GM12878 (cell line): ENCODE measurements at regions of chr7 and their contacts with region 1.

Region 1: DNA sequence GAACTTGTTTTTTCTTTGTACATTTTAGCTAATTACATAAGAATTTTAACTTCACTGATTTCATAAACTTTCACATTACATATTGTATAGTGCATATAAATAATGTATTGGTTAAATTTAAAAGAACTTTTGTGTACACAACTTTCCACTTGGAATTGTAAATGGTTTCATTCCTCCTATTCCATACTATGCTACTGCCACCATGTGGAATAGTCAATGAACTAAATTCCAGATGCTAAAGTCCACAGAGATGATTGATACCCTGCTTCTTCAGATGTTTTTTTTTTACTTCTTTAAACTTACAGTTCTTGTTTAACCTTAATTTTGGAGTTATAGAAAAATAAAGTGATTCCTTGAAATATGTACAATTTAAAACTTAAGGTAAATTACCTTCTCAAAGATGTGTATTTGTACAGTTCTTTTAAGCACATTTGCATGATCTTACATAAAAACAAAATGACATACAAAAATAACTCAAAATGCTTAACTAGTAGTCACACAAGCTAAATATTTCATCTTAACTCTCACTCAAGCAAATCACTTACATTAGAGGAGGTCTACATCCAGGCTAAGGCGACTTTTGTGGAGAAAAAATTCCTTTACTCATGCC is 247.6 kb upstream of the HGF start:
- DNase-seq: no peak
- ATAC-seq: 0 out of 3 replicates have a peak, but pooled peaks have one; percentile 28
- H3K4me3 ChIP-seq: no peak overlapping the region
- H3K27ac ChIP-seq: no peak overlapping the region
- H3K4me1 ChIP-seq: no peaks in the 10 kb centered on the region
- H3K27me3 ChIP-seq: no peaks in the 10 kb centered on the region; a peak in 1 of 4 replicates
- CTCF ChIP-seq: peak; percentile 14 to 52 (median 28); a peak in 2 of 6 replicates
- EP300 ChIP-seq: no peak
- POLR2A ChIP-seq: no peak
- RAD21 ChIP-seq: peak; percentile 71

Region 2: DNA sequence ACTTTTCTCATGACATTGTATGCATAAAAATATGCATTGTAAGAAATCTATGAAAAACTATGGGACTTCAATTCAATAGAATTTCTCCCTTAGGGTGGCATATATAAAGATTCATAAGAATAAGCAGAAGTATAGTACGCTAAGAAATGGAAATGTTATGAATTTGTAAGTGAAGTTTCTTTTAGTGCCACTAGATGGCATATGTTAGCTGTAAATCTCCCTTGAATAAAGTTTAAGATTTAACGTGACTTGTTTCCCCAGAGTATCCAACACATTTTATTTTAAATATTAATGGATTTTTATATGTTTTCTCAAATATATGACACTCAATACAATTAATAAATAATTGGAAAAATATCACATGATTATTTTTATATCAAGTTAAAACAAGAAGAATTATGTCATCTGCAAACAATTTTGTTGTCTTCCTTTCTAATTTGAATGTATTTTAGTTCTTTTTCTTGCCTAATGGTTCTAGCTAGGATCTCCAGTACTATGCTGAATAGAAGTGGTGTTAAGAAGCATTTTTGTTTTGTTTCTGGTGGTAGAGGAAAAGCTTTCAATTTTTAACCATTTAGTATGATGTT is 534.7 kb before region 1 on chr7:
- CTCF ChIA-PET with region 1: interaction called, 19 read pairs
- POLR2A ChIA-PET with region 1: no interaction called
- RAD21 ChIA-PET with region 1: interaction called, 4 read pairs
- SMC1A ChIA-PET with region 1: interaction called, 9 read pairs
- in situ Hi-C with region 1: no loop called
- intact Hi-C with region 1: no loop called
- DNase-seq: no peak
- ATAC-seq: peak; percentile 65
- H3K4me3 ChIP-seq: no peak overlapping the region
- H3K27ac ChIP-seq: no peak overlapping the region
- H3K4me1 ChIP-seq: no peaks in the 10 kb centered on the region
- H3K27me3 ChIP-seq: no peaks in the 10 kb centered on the region
- CTCF ChIP-seq: peak; percentile 36 to 58 (median 43); a peak in 4 of 6 replicates
- EP300 ChIP-seq: no peak
- POLR2A ChIP-seq: no peak
- RAD21 ChIP-seq: peak; percentile 53; the same call in 1 of the 2 replicates

Region 3: DNA sequence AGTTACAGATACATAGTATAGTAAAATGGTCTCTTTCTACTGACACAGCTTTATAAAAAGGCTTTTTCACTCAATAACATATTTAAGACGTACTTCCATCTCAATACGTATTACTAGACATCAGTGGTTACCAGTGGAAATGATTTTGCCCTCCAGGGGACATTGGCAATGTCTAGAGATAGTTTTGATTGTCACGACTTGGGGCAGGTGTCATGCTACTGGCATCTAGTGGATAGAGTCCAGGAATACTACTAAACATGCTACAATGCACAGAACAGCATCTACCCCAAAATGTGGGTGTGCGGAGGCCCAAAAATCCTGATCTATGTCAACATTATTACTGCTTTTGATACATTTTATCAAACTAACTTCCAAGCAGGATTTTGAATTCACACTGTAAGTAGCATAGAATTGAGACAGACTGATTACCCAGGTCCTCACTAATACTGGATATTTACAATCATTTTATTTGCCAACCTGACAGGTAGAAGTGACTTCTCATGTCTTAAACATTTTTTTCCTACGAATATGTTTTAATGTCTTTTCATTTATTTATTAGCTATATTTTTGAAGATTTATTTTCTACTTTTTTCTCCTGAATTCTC is 301.4 kb before region 1 on chr7:
- CTCF ChIA-PET with region 1: interaction called, 3 read pairs
- POLR2A ChIA-PET with region 1: no interaction called
- RAD21 ChIA-PET with region 1: no interaction called
- SMC1A ChIA-PET with region 1: interaction called, 5 read pairs
- in situ Hi-C with region 1: no loop called
- intact Hi-C with region 1: loop called (anchors 10 kb)
- DNase-seq: no peak
- ATAC-seq: peak; percentile 80
- H3K4me3 ChIP-seq: no peak overlapping the region
- H3K27ac ChIP-seq: no peak overlapping the region
- H3K4me1 ChIP-seq: no peaks in the 10 kb centered on the region
- H3K27me3 ChIP-seq: no peaks in the 10 kb centered on the region
- CTCF ChIP-seq: peak; percentile 14 to 59 (median 26); a peak in 3 of 6 replicates
- EP300 ChIP-seq: no peak
- POLR2A ChIP-seq: no peak
- RAD21 ChIP-seq: peak; percentile 76

Region 4: GRCh38 chr7:81887098-81888090 is 130.0 kb before region 1 on chr7:
- CTCF ChIA-PET with region 1: no interaction called
- POLR2A ChIA-PET with region 1: no interaction called
- RAD21 ChIA-PET with region 1: interaction called, 3 read pairs
- SMC1A ChIA-PET with region 1: no interaction called
- in situ Hi-C with region 1: no loop called
- intact Hi-C with region 1: loop called (anchors 10 kb)
- DNase-seq: peak; percentile 37
- ATAC-seq: peak; percentile 53
- H3K4me3 ChIP-seq: peak overlapping the region; percentile 33; the same call in 1 of the 2 replicates
- H3K27ac ChIP-seq: no peak overlapping the region
- H3K4me1 ChIP-seq: peaks cover 18% of the 10 kb centered on the region
- H3K27me3 ChIP-seq: no peaks in the 10 kb centered on the region
- CTCF ChIP-seq: no peak
- EP300 ChIP-seq: peak in 1 of 2 experiments; percentile 34; a peak in 2 of 4 replicates
- POLR2A ChIP-seq: no peak
- RAD21 ChIP-seq: no peak

Region 5: DNA sequence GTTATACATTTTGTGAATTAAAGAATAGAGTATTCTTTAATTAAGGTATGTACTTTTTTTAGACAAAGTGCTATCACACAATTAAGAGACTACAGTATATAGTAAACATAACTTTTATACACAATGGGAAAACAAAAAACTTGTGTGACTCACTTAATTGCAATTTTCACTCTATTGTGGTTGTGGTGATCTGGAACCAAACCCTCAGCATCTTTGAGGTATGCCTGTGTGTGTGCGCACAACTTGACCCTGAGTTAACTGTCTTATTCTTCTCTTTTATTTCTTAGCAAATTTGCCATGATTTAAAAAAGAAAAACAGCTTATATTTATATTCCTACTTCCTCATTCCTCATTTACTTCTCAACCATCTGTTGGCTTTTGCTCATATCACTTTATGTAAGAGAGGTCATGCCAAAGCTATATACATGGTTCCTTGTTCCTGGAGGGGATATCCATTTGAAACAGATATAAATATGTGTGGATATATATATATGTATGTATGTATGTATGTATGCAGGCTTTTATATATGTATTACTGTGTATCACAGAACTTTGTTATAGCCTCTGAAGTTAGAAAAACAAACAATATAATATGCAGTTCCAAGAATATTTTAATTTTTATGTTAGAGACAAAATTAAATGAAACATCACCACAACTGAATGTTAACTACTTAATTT is 11.9 kb after region 1 on chr7:
- CTCF ChIA-PET with region 1: interaction called, 4 read pairs
- POLR2A ChIA-PET with region 1: no interaction called
- RAD21 ChIA-PET with region 1: interaction called, 3 read pairs
- SMC1A ChIA-PET with region 1: interaction called, 17 read pairs
- in situ Hi-C with region 1: no loop called
- intact Hi-C with region 1: no loop called
- DNase-seq: no peak
- ATAC-seq: no peak
- H3K4me3 ChIP-seq: no peak overlapping the region
- H3K27ac ChIP-seq: no peak overlapping the region
- H3K4me1 ChIP-seq: no peaks in the 10 kb centered on the region
- H3K27me3 ChIP-seq: no peaks in the 10 kb centered on the region
- CTCF ChIP-seq: no peak
- EP300 ChIP-seq: no peak
- POLR2A ChIP-seq: no peak
- RAD21 ChIP-seq: no peak